CD4-positive, alpha-beta memory T cell (primary cell): ENCODE measurements at regions of chr2 and their contacts with region 1.

Region 1: DNA sequence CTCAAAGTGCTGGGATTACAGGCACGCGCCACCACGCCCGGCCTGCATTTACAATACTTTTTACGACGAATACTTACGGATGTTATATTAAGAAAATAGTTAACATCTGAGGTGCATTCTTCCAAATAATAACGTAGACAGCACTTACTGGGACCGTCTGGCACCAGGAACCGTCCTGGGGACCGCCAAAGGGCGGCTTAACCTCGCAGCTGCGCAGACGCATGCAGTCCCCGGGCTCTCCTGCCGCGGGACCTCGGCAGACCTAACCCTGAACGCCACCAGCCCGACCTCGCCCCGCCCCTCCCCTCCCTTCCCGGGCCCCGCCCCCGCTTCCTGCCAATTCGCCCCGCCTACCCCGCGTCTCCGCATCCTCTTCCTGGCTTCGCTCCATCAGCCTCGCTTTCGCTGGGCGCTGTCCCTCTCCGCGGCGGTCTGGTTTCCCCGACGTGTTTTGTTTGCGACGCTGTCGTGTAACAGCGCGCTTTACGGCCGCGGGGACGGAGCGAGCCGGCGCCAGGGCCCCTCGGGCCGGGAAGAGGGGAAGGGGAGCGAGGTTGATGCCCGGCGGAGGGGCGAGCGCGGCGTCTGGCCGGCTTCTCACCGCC is at the start of gene CNOT11:
- DNase-seq: peak; percentile 98 to 99 (median 99)
- H3K4me3 ChIP-seq: peak within 1 kb of the TSS; percentile 88 to 94
- H3K4me3 Mint-ChIP-seq: peak within 1 kb of the TSS; percentile 89 to 99 (median 96)
- H3K27ac ChIP-seq: peak within 1 kb of the TSS; percentile 97
- H3K27ac Mint-ChIP-seq: peak within 1 kb of the TSS; percentile 84 to 99 (median 95)
- H3K4me1 ChIP-seq: peaks cover 37% of the 10 kb centered on the region
- H3K4me1 Mint-ChIP-seq: peaks cover 29 to 57% (median 41%) of the 10 kb centered on the region in 4 donors
- H3K27me3 ChIP-seq: no peaks in the 10 kb centered on the region
- H3K27me3 Mint-ChIP-seq: no peaks in the 10 kb centered on the region
- total RNA-seq, gene CNOT11: 53.8 to 56.9 TPM

Region 2: DNA sequence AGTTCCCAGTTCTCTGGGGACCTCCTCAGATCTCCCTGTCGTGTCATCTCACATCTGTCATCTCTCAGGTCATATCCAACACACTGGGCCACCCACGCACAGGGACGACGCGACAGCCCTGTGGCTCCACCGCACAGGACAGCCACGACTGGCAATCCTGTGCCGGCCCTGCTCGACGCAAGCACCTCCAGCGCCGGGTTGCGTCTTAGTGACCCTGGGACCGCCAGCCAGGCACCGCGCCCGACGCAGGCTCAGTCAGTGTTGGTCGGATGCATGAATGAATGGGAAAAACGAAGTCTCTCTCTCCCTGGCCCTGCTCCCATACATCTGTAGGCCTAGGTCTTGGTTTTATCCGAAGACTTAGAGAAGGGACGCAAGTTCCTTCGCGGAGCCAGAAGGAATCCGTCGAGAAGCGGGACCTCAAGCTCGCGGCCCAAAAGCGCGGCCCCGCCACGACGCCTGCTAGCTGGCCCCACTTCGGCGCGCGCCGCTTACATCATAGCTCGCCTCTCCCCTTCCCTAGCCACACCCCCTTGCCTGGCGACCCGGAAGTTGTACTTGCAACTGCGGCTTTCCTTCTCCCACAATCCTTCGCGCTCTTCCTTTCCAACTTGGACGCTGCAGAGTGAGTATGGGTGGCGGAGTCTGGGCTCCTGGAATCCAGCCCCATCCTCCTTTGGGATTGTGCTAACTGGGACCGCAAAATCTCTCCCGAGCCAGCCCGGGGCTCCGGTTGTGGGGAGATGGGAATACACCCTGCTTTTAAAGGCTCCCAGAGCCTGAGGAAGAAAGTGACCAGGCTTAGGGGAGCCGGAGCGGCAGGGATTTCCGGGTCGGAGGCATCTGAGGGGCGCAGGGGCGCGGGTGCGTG is 250.6 kb before region 1 on chr2 and contains the start of gene RPL31:
- CTCF ChIA-PET with region 1: no interaction called
- POLR2A ChIA-PET with region 1: interaction called, 15 read pairs
- intact Hi-C with region 1: loop called (anchors 5 kb)
- DNase-seq: peak; percentile 93 to 98 (median 96)
- H3K4me3 ChIP-seq: peak within 1 kb of the TSS; percentile 97 to 98
- H3K4me3 Mint-ChIP-seq: peak within 1 kb of the TSS; percentile 90 to 96 (median 95)
- H3K27ac ChIP-seq: peak within 1 kb of the TSS; percentile 91
- H3K27ac Mint-ChIP-seq: peak within 1 kb of the TSS; percentile 91 to 99 (median 98)
- H3K4me1 ChIP-seq: peaks cover 37% of the 10 kb centered on the region
- H3K4me1 Mint-ChIP-seq: peaks cover 32 to 51% (median 45%) of the 10 kb centered on the region in 4 donors
- H3K27me3 ChIP-seq: no peaks in the 10 kb centered on the region
- H3K27me3 Mint-ChIP-seq: no peaks in the 10 kb centered on the region
- total RNA-seq, gene RPL31: 2,455 to 2,531 TPM

Region 3: DNA sequence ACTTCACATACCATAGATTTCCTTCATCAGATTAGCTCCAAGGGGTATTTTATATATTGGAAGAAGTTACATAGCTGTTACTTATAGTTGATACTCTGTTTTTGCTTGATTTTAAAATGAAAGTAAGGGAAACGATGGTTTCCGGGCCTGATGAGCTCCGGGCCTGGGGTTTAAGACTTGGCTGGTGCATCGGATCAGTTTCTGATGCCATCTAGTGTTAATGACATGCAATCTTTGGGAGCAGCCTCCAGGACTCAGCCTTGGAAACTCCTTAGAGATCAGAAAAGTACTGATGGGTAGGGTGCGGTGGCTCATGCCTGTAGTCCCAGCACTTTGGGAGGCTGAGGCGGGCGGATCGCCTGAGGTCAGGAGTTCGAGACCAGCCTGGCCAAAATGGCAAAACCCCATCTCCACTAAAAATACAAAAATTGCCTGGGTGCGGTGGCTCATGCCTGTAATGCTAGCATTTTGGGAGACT is 47.0 kb before region 1 on chr2:
- CTCF ChIA-PET with region 1: interaction called, 13 read pairs
- POLR2A ChIA-PET with region 1: no interaction called
- intact Hi-C with region 1: loop called (anchors 10 kb)
- DNase-seq: peak in 4 of 5 donors; percentile 37 to 57 (median 56)
- H3K4me3 ChIP-seq: no peak overlapping the region
- H3K4me3 Mint-ChIP-seq: peak overlapping the region; percentile 55 to 87 (median 72)
- H3K27ac ChIP-seq: no peak overlapping the region
- H3K27ac Mint-ChIP-seq: peak overlapping the region; percentile 68 to 90 (median 83)
- H3K4me1 ChIP-seq: peaks cover 4% of the 10 kb centered on the region
- H3K4me1 Mint-ChIP-seq: peaks cover 2 to 14% (median 12%) of the 10 kb centered on the region in 4 donors
- H3K27me3 ChIP-seq: no peaks in the 10 kb centered on the region
- H3K27me3 Mint-ChIP-seq: no peaks in the 10 kb centered on the region

Region 4: GRCh38 chr2:101272045-101272784 is 19.7 kb after region 1 on chr2:
- CTCF ChIA-PET with region 1: no interaction called
- POLR2A ChIA-PET with region 1: interaction called, 21 read pairs
- intact Hi-C with region 1: no loop called
- DNase-seq: peak in 1 of 5 donors; percentile 16
- H3K4me3 ChIP-seq: no peak overlapping the region
- H3K4me3 Mint-ChIP-seq: no peak overlapping the region
- H3K27ac ChIP-seq: no peak overlapping the region
- H3K27ac Mint-ChIP-seq: peak overlapping the region; percentile 3 to 85 (median 57)
- H3K4me1 ChIP-seq: peaks cover 23% of the 10 kb centered on the region
- H3K4me1 Mint-ChIP-seq: peaks cover 21 to 34% (median 27%) of the 10 kb centered on the region in 4 donors
- H3K27me3 ChIP-seq: no peaks in the 10 kb centered on the region
- H3K27me3 Mint-ChIP-seq: no peaks in the 10 kb centered on the region

Region 5: DNA sequence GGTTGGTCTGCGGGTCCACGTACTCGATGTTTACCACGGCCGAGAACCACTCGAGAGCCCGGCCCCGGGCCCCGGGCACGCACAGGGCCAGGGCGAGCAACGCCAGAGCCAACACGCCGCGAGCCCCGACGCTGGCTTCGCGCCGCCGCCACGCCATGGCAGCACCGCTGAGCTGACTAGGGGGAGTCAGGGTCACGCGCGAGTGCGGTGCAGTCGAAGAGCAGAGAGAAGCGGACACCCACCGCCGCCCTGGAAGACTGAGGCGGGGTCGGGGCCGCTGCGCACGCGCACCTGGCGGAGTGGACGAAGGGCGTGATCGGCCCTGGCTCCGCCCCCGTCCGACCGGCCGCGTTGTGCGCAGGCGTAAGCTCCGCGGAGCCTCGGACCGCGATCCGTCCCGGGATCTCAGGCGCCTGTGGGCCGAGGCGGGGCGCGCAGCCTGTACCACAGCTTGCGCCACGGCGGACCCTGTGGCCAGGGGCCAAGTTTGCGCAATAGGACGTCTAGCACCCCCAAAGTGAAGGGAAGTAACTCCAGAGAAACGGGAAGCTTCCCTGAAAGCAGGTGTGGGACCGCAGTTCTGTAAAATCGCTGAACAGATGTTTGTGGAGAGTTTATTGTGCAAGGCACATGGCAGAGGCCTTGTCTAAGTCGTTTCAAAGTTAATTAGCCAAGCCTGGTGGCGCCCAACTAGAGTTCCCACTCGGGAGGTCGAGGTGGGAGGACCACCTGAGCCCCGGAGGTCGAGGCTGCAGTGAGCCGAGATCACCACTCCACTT is 56.1 kb after region 1 on chr2 and contains the start of gene RNF149:
- CTCF ChIA-PET with region 1: interaction called, 5 read pairs
- POLR2A ChIA-PET with region 1: interaction called, 31 read pairs
- intact Hi-C with region 1: loop called (anchors 1 kb)
- DNase-seq: peak; percentile 89 to 92 (median 90)
- H3K4me3 ChIP-seq: peak within 1 kb of the TSS; percentile 68 to 92
- H3K4me3 Mint-ChIP-seq: peak within 1 kb of the TSS; percentile 93 to 100 (median 100)
- H3K27ac ChIP-seq: peak within 1 kb of the TSS; percentile 86
- H3K27ac Mint-ChIP-seq: peak within 1 kb of the TSS; percentile 96 to 100 (median 99)
- H3K4me1 ChIP-seq: peaks cover 72% of the 10 kb centered on the region
- H3K4me1 Mint-ChIP-seq: peaks cover 53 to 95% (median 67%) of the 10 kb centered on the region in 4 donors
- H3K27me3 ChIP-seq: no peaks in the 10 kb centered on the region
- H3K27me3 Mint-ChIP-seq: no peaks in the 10 kb centered on the region
- total RNA-seq, gene RNF149: 138 to 154 TPM

Region 6: GRCh38 chr2:101387151-101387807 is 134.8 kb after region 1 on chr2 and contains the start of gene CREG2:
- CTCF ChIA-PET with region 1: interaction called, 8 read pairs
- POLR2A ChIA-PET with region 1: interaction called, 3 read pairs
- intact Hi-C with region 1: loop called (anchors 5 kb)
- DNase-seq: peak in 4 of 5 donors; percentile 56 to 63 (median 62)
- H3K4me3 ChIP-seq: peak within 1 kb of the TSS in 1 of 2 donors; percentile 38
- H3K4me3 Mint-ChIP-seq: peak within 1 kb of the TSS; percentile 75 to 89 (median 83)
- H3K27ac ChIP-seq: no peak within 1 kb of the TSS
- H3K27ac Mint-ChIP-seq: no peak within 1 kb of the TSS
- H3K4me1 ChIP-seq: peaks cover 15% of the 10 kb centered on the region
- H3K4me1 Mint-ChIP-seq: peaks cover 4 to 11% (median 8%) of the 10 kb centered on the region in 4 donors
- H3K27me3 ChIP-seq: peaks cover 17% of the 10 kb centered on the region
- H3K27me3 Mint-ChIP-seq: peaks cover 30 to 43% of the 10 kb centered on the region in 2 donors
- total RNA-seq, gene CREG2: not detected